ENCODE measurements at regions of chr16 and their contacts with region 1.

Region 1: DNA sequence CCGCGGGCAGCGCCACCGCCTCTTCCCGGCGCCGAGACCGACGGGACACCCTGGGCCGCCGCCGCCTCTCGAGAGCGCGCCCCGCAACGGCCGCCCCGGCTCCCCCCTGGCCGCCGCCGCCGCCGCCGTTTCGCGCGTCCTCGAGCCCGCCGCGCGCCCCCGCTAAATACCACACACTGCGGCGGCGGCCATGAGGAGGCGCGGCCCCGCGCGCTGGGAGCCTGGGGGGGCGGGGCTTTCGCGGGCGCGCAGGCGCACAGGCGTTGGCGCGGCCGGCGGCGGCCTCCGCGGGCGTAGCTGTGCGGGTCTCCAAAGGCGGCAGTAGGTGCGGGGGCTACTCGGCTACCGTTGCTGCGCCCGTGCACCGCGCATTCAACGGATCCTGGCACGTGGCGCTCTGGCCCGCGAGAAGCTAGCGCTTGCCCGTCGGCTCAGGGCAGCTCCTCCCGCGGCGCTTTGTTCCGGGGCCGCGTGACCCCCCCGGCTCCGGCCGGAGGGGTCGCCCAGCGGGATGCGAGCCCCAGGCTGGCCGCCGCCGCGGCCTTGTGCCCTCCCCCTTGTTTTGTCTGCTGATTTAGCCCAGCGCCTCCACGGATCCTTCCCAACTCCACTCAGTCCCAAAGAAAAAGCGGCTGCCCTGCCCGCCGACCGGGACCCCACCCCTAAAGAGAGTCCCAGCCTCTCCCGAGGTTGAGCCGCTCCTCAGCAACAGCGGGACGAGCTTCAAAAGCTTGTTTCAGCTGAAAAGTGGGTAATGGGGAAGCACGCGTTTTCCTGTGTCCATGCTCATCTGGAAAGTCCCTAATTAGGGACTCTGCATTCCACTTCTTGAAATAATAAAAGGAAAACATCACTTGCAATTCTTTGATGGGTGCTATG is at the start of gene SIAH1:
- DNase-seq: peak; percentile 85 to 90 (median 87)
- H3K4me3 ChIP-seq: peak within 1 kb of the TSS; percentile 70
- H3K4me3 Mint-ChIP-seq: peak within 1 kb of the TSS; percentile 89 to 99 (median 92)
- H3K27ac ChIP-seq: peak within 1 kb of the TSS; percentile 53
- H3K27ac Mint-ChIP-seq: peak within 1 kb of the TSS; percentile 80 to 97 (median 92)
- H3K4me1 ChIP-seq: peaks cover 15% of the 10 kb centered on the region
- H3K4me1 Mint-ChIP-seq: peaks cover 13 to 29% (median 14%) of the 10 kb centered on the region in 3 donors
- H3K27me3 ChIP-seq: no peaks in the 10 kb centered on the region
- H3K27me3 Mint-ChIP-seq: peaks cover 0 to 3% of the 10 kb centered on the region in 2 donors
- total RNA-seq, gene SIAH1: 11.6 to 13.3 TPM

Region 2: GRCh38 chr16:48609652-48610029 is 224.1 kb after region 1 on chr16:
- CTCF ChIA-PET with region 1: no interaction called
- POLR2A ChIA-PET with region 1: interaction called, 15 read pairs
- DNase-seq: no peak
- H3K4me3 ChIP-seq: peak overlapping the region; percentile 68
- H3K4me3 Mint-ChIP-seq: no peak overlapping the region
- H3K27ac ChIP-seq: peak overlapping the region; percentile 97
- H3K27ac Mint-ChIP-seq: peak overlapping the region; percentile 89 to 98 (median 94)
- H3K4me1 ChIP-seq: peaks cover 83% of the 10 kb centered on the region
- H3K4me1 Mint-ChIP-seq: peaks cover 41 to 45% (median 41%) of the 10 kb centered on the region in 3 donors
- H3K27me3 ChIP-seq: no peaks in the 10 kb centered on the region
- H3K27me3 Mint-ChIP-seq: peaks cover 0 to 6% of the 10 kb centered on the region in 2 donors